Activated naive CD4-positive, alpha-beta T cell treated with anti-CD3 and anti-CD28 coated beads for 36 hours (primary cell): ENCODE measurements at regions of chr1 and their contacts with region 1.

Region 1: GRCh38 chr1:154747740-154748404 is 122.2 kb downstream of the KCNN3 start:
- DNase-seq: peak; percentile 80
- H3K4me3 Mint-ChIP-seq: peak overlapping the region; percentile 80
- H3K27ac Mint-ChIP-seq: peak overlapping the region; percentile 96
- H3K4me1 Mint-ChIP-seq: peaks cover 80% of the 10 kb centered on the region
- H3K27me3 Mint-ChIP-seq: no peaks in the 10 kb centered on the region

Region 2: DNA sequence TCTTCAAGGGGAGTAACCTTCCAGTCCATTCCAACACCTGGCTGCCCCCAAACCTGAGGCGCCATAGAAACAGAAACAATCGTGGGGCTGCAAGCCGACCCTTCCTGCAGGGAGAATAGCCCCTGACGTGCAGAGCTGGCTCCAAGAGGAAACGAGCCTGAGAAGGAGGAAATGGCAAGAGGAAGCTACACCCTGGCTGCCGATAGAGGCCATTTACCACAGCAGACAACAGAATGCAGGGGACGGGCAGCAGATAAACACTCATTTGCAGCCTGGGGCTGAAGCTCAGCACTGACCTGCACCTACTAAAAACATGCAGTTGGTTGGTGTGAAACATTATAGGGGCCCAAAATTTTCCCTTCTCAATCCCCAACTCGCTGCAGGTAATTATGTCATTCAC is 254.6 kb before region 1 on chr1:
- CTCF ChIA-PET with region 1: no interaction called
- intact Hi-C with region 1: loop called (anchors 10 kb)
- DNase-seq: peak; percentile 35
- H3K4me3 Mint-ChIP-seq: peak overlapping the region; percentile 17
- H3K27ac Mint-ChIP-seq: no peak overlapping the region
- H3K4me1 Mint-ChIP-seq: peaks cover 38% of the 10 kb centered on the region
- H3K27me3 Mint-ChIP-seq: peaks cover 4% of the 10 kb centered on the region

Region 3: DNA sequence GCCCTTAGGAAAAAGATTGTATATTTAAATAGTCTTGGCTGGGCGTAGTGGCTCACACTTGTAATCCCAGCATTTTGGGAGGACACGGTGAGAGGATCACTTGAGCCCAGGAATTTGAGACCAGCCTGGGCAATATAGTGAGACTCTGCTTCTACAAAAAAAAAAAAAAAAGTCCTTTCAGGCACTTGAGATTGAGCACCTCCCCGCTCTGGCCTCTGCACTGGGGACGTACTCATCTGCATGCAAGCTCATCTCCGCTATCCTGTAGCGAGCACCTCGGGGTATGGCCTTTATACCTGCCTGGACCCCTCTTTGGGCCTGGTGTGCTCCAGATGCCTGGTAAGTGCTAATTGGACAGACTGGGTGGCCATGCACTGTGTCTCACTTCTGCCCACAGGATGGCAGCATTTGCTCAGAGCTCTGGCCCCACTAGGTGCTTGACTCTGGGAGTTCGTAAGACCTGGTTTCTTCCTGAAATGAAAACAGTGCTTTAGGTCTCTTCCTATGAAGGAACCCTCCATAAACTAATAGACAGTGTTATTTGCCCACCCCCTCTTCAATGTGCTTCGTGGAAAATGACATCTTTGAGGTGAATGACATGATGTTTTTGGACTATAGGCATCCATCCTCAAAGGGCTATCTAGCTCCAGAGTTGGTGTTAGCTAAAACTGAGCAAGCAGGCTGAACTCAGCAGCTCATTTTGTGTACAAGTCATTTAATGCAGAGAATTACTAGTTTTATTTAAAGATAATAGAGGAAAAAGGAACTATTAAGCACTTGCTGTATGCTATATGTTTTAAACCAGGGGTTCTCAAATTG is 78.2 kb before region 1 on chr1:
- CTCF ChIA-PET with region 1: interaction called, 33 read pairs
- intact Hi-C with region 1: loop called (anchors 1 kb)
- DNase-seq: peak; percentile 90
- H3K4me3 Mint-ChIP-seq: no peak overlapping the region
- H3K27ac Mint-ChIP-seq: no peak overlapping the region
- H3K4me1 Mint-ChIP-seq: peaks cover 34% of the 10 kb centered on the region
- H3K27me3 Mint-ChIP-seq: no peaks in the 10 kb centered on the region

Region 4: DNA sequence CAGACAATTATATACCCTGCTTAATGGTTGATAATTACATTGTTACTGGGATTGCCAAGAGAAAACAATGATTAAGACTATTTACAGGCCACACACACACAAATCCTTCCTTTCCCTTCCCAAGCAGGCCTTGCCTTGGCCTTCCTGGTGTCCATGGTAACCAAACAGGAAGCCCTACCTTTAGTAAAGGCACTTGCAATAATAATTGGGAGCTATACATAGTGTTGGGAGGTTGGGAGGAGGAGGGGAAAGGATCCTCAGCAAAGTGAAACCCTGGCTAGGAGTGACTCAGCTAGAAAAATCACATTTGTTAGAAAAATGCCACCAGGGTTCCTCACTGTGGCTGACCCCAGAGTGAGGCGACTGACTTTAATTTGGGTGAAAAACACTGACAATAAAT is 17.6 kb before region 1 on chr1:
- CTCF ChIA-PET with region 1: interaction called, 19 read pairs
- intact Hi-C with region 1: loop called (anchors 2 kb)
- DNase-seq: no peak
- H3K4me3 Mint-ChIP-seq: no peak overlapping the region
- H3K27ac Mint-ChIP-seq: no peak overlapping the region
- H3K4me1 Mint-ChIP-seq: peaks cover 44% of the 10 kb centered on the region
- H3K27me3 Mint-ChIP-seq: no peaks in the 10 kb centered on the region

Region 5: GRCh38 chr1:154760469-154760933 is 12.6 kb after region 1 on chr1:
- CTCF ChIA-PET with region 1: interaction called, 56 read pairs
- intact Hi-C with region 1: loop called (anchors 1 kb)
- DNase-seq: peak; percentile 85
- H3K4me3 Mint-ChIP-seq: peak overlapping the region; percentile 75
- H3K27ac Mint-ChIP-seq: peak overlapping the region; percentile 99
- H3K4me1 Mint-ChIP-seq: peaks cover 56% of the 10 kb centered on the region
- H3K27me3 Mint-ChIP-seq: no peaks in the 10 kb centered on the region

Region 6: GRCh38 chr1:154784924-154785531 is 37.2 kb after region 1 on chr1:
- CTCF ChIA-PET with region 1: no interaction called
- intact Hi-C with region 1: no loop called
- DNase-seq: peak; percentile 85
- H3K4me3 Mint-ChIP-seq: peak overlapping the region; percentile 54
- H3K27ac Mint-ChIP-seq: peak overlapping the region; percentile 98
- H3K4me1 Mint-ChIP-seq: peaks cover 38% of the 10 kb centered on the region
- H3K27me3 Mint-ChIP-seq: no peaks in the 10 kb centered on the region

Region 7: GRCh38 chr1:154912755-154913154 is 164.9 kb after region 1 on chr1:
- CTCF ChIA-PET with region 1: no interaction called
- intact Hi-C with region 1: no loop called
- DNase-seq: no peak
- H3K4me3 Mint-ChIP-seq: no peak overlapping the region
- H3K27ac Mint-ChIP-seq: no peak overlapping the region
- H3K4me1 Mint-ChIP-seq: no peaks in the 10 kb centered on the region
- H3K27me3 Mint-ChIP-seq: no peaks in the 10 kb centered on the region

Region 8: GRCh38 chr1:155070721-155071569 is 323.1 kb after region 1 on chr1:
- CTCF ChIA-PET with region 1: no interaction called
- intact Hi-C with region 1: no loop called
- DNase-seq: peak; percentile 86
- H3K4me3 Mint-ChIP-seq: peak overlapping the region; percentile 42
- H3K27ac Mint-ChIP-seq: no peak overlapping the region
- H3K4me1 Mint-ChIP-seq: peaks cover 15% of the 10 kb centered on the region
- H3K27me3 Mint-ChIP-seq: no peaks in the 10 kb centered on the region